ENCODE measurements at regions of chr10 and their contacts with region 1.

Region 1: GRCh38 chr10:69716711-69717560 is 84.8 kb upstream of the COL13A1 start:
- DNase-seq: peak; percentile 33
- ATAC-seq: peak; percentile 60
- H3K4me3 ChIP-seq: no peak overlapping the region
- H3K27ac ChIP-seq: no peak overlapping the region
- H3K4me1 ChIP-seq: peaks cover 10% of the 10 kb centered on the region
- H3K27me3 ChIP-seq: peaks cover 3% of the 10 kb centered on the region; the same call in 1 of the 2 replicates
- CTCF ChIP-seq: peak; percentile 79
- POLR2A ChIP-seq: no peak
- RAD21 ChIP-seq: peak; percentile 85

Region 2: DNA sequence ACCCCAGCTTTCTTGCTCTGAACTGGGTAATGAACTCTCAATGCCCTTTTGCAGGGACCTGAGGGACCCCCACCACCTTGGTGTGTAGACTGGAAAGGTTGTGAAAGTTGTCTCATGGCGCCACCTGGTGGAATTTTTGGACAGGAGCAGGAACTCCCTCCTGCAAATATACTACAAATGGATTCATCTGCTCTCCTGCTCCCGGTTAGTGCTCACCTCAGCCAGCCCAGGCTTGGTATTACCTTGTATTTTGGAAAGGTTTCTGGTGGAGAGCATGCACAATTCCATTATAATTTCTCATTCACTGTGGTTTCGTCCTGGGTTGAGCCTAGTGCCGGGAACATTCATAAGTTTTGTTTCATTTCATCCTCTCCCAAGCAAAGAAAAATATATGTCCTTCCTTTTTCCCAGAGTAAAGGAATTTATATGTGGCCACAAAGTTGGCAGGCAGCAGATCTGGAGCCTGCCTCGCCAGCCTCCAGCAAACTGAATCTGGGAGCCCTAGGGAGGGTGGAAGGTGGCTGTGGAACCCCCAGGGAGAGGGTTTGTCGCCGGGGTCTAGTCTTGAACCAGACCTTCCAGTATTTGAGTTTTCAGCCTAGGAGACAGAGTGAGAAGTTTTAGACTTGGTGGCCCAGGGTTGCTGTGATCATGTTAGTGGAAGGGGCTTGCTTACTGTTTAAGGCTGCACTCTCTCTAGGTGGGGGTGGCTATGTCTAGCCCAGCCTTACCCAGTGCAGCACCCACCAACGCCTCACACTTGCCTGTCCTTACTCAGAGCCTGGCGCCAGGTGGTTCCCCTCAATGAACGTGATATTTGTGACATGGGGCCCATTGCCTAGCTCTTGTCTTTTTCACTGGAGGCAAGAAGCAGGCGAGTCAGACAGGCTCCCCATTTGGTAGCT is 77.4 kb before region 1 on chr10:
- CTCF ChIA-PET with region 1: interaction called, 10 read pairs
- POLR2A ChIA-PET with region 1: no interaction called
- dilution Hi-C with region 1: no loop called
- in situ Hi-C with region 1: loop called (anchors 5 kb)
- intact Hi-C with region 1: loop called (anchors 1 kb)
- DNase-seq: peak; percentile 56
- ATAC-seq: peak; percentile 87
- H3K4me3 ChIP-seq: no peak overlapping the region
- H3K27ac ChIP-seq: no peak overlapping the region
- H3K4me1 ChIP-seq: no peaks in the 10 kb centered on the region; the same call in 1 of the 2 replicates
- H3K27me3 ChIP-seq: peaks cover 72% of the 10 kb centered on the region
- CTCF ChIP-seq: peak; percentile 81
- POLR2A ChIP-seq: no peak
- RAD21 ChIP-seq: peak; percentile 78

Region 3: DNA sequence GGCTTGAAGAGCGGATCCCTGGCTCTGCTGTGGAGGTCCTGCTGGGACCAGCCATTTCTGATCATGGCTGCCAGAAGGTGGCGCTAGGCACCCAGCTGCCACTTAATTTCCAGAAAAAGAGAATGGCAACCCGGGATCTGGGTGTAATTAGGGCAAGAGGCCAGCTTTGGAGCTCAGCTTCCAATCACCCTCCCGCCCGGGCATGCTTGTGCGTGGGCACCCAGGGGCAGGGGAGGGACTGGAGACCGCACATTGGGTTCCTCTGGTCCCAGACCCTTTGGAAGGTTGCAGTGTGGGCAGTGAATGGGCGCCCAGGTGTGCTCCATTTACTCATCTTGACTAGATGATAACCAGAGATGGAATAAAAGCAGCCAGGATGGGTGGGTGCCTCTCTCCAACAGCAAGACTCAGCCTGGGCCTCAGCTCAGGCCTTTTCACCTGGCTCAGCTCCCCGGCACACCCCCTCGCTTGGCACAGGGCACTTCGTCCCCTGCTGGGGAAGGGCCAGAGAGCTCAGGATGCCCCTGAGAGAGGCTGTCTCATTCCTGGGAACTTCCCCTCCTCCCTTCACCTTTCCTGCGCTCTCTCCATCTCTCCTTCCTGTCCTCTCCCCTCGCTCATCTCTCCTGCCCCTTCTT is 72.2 kb before region 1 on chr10:
- CTCF ChIA-PET with region 1: interaction called, 10 read pairs
- POLR2A ChIA-PET with region 1: no interaction called
- dilution Hi-C with region 1: no loop called
- in situ Hi-C with region 1: loop called (anchors 5 kb)
- intact Hi-C with region 1: loop called (anchors 1 kb)
- DNase-seq: peak; percentile 41
- ATAC-seq: peak; percentile 86
- H3K4me3 ChIP-seq: no peak overlapping the region
- H3K27ac ChIP-seq: no peak overlapping the region
- H3K4me1 ChIP-seq: no peaks in the 10 kb centered on the region; the same call in 1 of the 2 replicates
- H3K27me3 ChIP-seq: peaks cover 57% of the 10 kb centered on the region
- CTCF ChIP-seq: peak; percentile 91
- POLR2A ChIP-seq: no peak
- RAD21 ChIP-seq: peak; percentile 94

Region 4: GRCh38 chr10:69678005-69678654 is 38.8 kb before region 1 on chr10:
- CTCF ChIA-PET with region 1: no interaction called
- POLR2A ChIA-PET with region 1: no interaction called
- dilution Hi-C with region 1: no loop called
- in situ Hi-C with region 1: no loop called
- intact Hi-C with region 1: no loop called
- DNase-seq: no peak
- ATAC-seq: no peak
- H3K4me3 ChIP-seq: no peak overlapping the region
- H3K27ac ChIP-seq: no peak overlapping the region
- H3K4me1 ChIP-seq: no peaks in the 10 kb centered on the region
- H3K27me3 ChIP-seq: peaks cover 87% of the 10 kb centered on the region
- CTCF ChIP-seq: no peak
- POLR2A ChIP-seq: no peak
- RAD21 ChIP-seq: no peak

Region 5: DNA sequence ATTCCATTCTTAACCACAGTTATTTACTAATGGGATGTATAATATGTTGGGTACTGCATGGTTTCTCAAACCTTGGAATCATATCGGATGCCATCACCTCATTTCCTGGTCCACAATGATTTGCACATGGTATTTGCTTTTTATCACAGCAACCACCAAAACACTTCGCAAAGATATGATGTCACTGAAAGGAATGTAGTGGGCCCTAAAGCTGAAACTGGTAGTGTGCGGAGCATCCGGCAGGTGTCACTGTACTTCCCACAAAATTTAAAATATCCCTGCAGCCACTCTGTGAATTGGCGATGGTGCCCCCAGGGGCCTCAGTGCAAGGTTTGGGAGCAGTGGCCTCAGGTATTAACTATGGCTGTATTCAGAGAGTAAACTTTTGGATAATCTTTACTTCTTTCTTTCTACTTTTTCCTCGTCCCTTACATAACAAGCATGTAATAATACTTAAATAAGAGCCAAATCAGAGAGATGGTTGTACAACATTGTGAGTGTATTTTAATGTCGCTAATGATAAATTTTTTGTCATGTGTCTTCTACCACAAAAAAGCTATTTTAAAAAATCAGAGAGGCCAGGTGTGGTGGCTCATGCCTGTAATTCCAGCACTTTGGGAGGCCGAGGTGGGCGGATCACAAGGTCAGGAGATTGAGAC is 20.7 kb before region 1 on chr10:
- CTCF ChIA-PET with region 1: interaction called, 7 read pairs
- POLR2A ChIA-PET with region 1: no interaction called
- dilution Hi-C with region 1: no loop called
- in situ Hi-C with region 1: no loop called
- intact Hi-C with region 1: loop called (anchors 1 kb)
- DNase-seq: peak; percentile 91
- ATAC-seq: peak; percentile 96
- H3K4me3 ChIP-seq: no peak overlapping the region
- H3K27ac ChIP-seq: no peak overlapping the region
- H3K4me1 ChIP-seq: no peaks in the 10 kb centered on the region
- H3K27me3 ChIP-seq: peaks cover 7% of the 10 kb centered on the region
- CTCF ChIP-seq: peak; percentile 73
- POLR2A ChIP-seq: no peak
- RAD21 ChIP-seq: peak; percentile 60

Measured in IMR-90 (cell line).